Activated CD4-positive, alpha-beta T cell treated with anti-CD3 and anti-CD28 coated beads, Interleukin-2, amount 10 ng/mL, durations not matched to agents 24 days and 14 days (primary cell): ENCODE measurements at regions of chr2 and their contacts with region 1.

Region 1: DNA sequence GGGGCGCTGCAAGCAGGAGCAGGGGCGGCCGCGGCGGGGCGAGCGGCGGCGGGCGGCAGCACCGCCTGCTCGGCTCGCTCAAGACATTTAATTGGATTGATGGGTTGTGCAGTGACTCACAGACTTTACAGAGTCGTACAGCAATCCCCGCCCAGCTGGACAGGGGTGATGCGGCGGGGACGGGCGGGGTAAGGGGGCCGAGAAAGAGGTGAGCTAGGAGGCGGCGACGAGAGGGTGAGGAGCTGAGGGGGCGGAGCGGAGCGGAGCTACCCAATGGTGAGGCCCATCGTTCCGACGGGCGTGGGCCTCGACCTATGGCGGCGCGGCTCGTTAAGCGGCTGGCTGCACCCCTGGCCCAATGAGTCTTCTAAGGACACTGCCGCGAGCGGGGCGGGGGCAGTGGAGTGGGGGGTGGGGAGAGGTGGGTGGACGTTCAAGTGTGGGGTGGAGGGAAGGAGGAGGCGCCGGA is 97.1 kb upstream of the SERTAD2 start:
- DNase-seq: peak; percentile 99
- H3K4me3 Mint-ChIP-seq: peak overlapping the region; percentile 98
- H3K27ac Mint-ChIP-seq: peak overlapping the region; percentile 99
- H3K4me1 Mint-ChIP-seq: peaks cover 22% of the 10 kb centered on the region
- H3K27me3 Mint-ChIP-seq: no peaks in the 10 kb centered on the region

Region 2: GRCh38 chr2:63841254-63842022 is 909.4 kb before region 1 on chr2 and contains the start of gene UGP2:
- intact Hi-C with region 1: loop called (anchors 2 kb)
- DNase-seq: peak; percentile 96
- H3K4me3 Mint-ChIP-seq: peak within 1 kb of the TSS; percentile 96
- H3K27ac Mint-ChIP-seq: peak within 1 kb of the TSS; percentile 100
- H3K4me1 Mint-ChIP-seq: peaks cover 48% of the 10 kb centered on the region
- H3K27me3 Mint-ChIP-seq: peaks cover 3% of the 10 kb centered on the region
- total RNA-seq, gene UGP2: 66.3 and 66.5 TPM in 2 replicates

Region 3: GRCh38 chr2:64565949-64566710 is 184.7 kb before region 1 on chr2:
- intact Hi-C with region 1: no loop called
- DNase-seq: no peak
- H3K4me3 Mint-ChIP-seq: no peak overlapping the region
- H3K27ac Mint-ChIP-seq: no peak overlapping the region
- H3K4me1 Mint-ChIP-seq: peaks cover 26% of the 10 kb centered on the region
- H3K27me3 Mint-ChIP-seq: no peaks in the 10 kb centered on the region

Region 4: DNA sequence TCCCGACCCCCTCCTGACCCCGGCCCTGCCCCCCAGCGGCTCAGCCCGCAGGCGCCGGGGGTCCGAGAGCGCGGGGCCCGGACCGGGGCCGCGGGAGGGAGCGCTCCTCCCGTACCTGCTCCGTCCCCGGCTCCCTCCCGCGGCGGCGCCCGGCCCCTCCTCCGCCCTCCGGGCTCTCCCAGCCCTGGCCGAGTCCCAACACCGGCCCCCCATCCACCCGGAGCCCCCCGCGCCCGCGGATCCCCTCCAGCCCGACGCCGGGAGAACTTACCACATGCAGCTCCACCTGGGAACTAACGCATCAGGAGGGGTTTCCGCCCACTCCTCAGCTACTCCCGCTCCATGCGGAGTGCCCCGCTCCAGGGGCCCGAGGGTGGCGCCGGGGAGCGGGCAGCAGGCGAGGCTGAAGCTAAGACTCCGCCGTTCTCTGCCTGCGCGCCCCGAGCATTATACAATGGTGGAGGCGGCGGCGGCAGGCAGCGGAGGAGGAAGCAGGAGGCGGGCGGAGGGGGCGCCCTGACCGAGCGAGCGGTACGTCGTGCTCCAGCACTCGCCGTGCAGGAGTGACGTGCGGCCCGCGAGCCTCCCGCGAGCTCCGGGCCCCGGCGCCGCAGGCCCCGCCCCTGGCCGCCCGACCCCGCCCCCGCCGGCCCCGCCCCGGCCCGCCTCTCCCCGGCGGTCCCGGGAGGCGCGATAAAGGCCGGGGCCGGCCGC is 97.3 kb before region 1 on chr2 and contains the start of gene SERTAD2:
- intact Hi-C with region 1: loop called (anchors 1 kb)
- DNase-seq: peak; percentile 96
- H3K4me3 Mint-ChIP-seq: peak within 1 kb of the TSS; percentile 95
- H3K27ac Mint-ChIP-seq: peak within 1 kb of the TSS; percentile 92
- H3K4me1 Mint-ChIP-seq: peaks cover 65% of the 10 kb centered on the region
- H3K27me3 Mint-ChIP-seq: no peaks in the 10 kb centered on the region
- total RNA-seq, gene SERTAD2: 24.6 and 26.7 TPM in 2 replicates

Region 5: DNA sequence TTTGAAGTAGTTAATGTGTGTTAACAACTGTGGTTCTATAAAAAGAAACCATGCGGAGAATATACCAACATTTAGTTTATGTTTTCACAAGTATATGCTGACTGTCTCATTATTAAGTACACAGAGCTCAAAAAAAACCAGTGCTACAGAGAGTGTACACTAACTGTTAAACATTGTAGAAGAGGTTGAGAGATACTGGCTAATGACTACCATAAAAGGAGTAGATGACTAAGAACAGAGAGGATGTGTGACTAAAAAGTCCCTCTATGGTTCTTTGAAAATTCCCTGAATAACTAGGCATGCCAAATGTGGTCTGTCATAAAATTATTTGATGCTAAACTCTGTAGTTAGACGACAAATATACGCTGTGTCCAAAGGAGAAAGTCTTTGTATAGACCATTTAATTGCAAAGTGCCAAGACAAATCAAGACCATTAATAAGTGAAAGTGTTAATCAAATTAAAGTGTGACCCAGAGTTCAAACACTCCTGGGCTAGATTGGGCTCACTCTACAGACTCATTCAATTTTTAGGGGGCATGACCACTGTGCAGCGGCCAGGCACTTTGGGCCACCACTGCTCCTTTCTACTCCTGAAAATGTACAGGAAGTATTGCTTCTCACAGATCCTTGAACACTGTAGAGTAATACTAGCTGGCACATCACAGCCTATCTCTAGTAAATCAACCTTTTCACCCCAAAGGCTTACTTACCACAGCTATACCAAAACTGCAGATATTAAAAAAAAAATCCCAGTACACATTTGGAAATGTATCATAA is 52.0 kb before region 1 on chr2:
- intact Hi-C with region 1: loop called (anchors 1 kb)
- DNase-seq: peak; percentile 64
- H3K4me3 Mint-ChIP-seq: peak overlapping the region; percentile 66
- H3K27ac Mint-ChIP-seq: peak overlapping the region; percentile 90
- H3K4me1 Mint-ChIP-seq: peaks cover 54% of the 10 kb centered on the region
- H3K27me3 Mint-ChIP-seq: no peaks in the 10 kb centered on the region

Region 6: GRCh38 chr2:64737547-64737946 is 13.3 kb before region 1 on chr2:
- intact Hi-C with region 1: loop called (anchors 1 kb)
- DNase-seq: peak; percentile 73
- H3K4me3 Mint-ChIP-seq: peak overlapping the region; percentile 72
- H3K27ac Mint-ChIP-seq: peak overlapping the region; percentile 77
- H3K4me1 Mint-ChIP-seq: peaks cover 30% of the 10 kb centered on the region
- H3K27me3 Mint-ChIP-seq: no peaks in the 10 kb centered on the region

Region 7: DNA sequence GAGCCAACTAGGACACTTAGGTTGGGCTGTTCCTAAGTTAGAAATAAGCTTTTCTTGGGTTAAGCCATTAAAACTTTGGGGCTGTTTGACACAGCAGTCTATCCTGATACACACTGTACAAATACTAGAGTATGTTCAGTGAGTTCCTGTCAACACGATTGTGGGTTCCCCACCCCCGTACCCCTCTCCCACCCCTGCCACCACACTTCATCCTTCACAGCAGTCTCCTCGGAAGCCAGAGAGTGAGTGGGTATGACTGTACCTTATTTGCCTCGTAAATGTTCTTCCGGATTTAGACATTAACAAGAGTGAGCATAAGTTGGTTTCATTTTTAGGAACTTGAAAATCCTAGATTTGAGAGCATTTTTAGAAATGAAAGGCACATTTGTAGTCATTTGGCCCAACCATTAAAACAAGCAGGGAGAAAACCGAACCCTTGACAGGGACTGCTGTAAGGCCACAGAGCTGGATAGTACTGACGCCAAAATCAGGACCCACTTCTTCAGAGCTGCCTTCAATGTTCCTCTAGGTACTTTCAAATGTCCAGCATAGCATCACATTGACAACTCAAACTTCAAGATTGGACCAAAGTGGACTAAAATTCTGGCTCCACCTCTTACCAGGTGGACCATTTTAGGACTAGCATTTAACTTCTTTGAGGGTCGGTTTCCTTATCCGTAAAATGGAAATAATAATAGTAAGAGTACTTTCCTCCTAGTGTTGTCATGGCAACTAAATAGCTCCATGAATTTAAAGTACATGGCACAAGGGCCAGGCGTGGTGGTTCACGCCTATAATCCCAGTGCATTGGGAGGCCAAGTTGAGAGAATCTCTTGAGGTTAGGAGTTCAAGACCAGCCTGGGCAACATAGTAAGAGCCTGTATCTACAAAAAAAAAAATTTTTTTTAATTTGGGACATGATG is 69.2 kb after region 1 on chr2:
- intact Hi-C with region 1: loop called (anchors 1 kb)
- DNase-seq: peak; percentile 82
- H3K4me3 Mint-ChIP-seq: peak overlapping the region; percentile 65
- H3K27ac Mint-ChIP-seq: peak overlapping the region; percentile 82
- H3K4me1 Mint-ChIP-seq: peaks cover 23% of the 10 kb centered on the region
- H3K27me3 Mint-ChIP-seq: no peaks in the 10 kb centered on the region

Region 8: GRCh38 chr2:64865073-64865830 is 114.4 kb after region 1 on chr2:
- intact Hi-C with region 1: loop called (anchors 2 kb)
- DNase-seq: peak; percentile 91
- H3K4me3 Mint-ChIP-seq: peak overlapping the region; percentile 73
- H3K27ac Mint-ChIP-seq: no peak overlapping the region
- H3K4me1 Mint-ChIP-seq: peaks cover 3% of the 10 kb centered on the region
- H3K27me3 Mint-ChIP-seq: peaks cover 14% of the 10 kb centered on the region